Vagina (tissue), 2 donors: ENCODE measurements at regions of chr14 and their contacts with region 1.

Region 1: DNA sequence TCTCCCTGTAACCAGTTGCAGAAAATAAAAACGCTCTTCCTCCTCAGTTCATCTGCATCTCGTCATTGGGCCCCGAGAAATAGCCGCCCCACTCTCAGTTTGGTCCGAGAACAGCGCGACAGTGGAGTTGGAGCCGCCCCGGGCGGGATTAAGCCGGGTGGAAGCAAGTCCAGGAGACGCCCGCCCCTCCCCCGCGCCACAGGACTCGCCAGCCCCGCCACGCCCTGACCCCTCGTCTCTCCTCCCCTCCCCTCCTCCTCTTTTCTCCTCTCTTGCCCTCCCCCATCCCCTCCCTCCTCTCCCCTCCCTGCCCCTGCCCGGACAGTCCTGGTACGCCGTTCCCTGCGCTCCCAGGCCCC is 83.7 kb downstream of the TNFAIP2 start:
- DNase-seq: no peak
- H3K4me3 ChIP-seq: peak overlapping the region; percentile 49 to 51
- H3K27ac ChIP-seq: peak overlapping the region; percentile 90
- H3K4me1 ChIP-seq: peaks cover 31% of the 10 kb centered on the region
- H3K27me3 ChIP-seq: no peaks in the 10 kb centered on the region
- CTCF ChIP-seq: no peak
- POLR2A ChIP-seq: peak in 1 of 2 donors; percentile 27

Region 2: GRCh38 chr14:103121846-103122584 is 85.0 kb before region 1 on chr14:
- intact Hi-C with region 1: loop called (anchors 5 kb)
- DNase-seq: peak in 1 of 2 donors; percentile 97
- H3K4me3 ChIP-seq: peak overlapping the region; percentile 53 to 59
- H3K27ac ChIP-seq: peak overlapping the region; percentile 93
- H3K4me1 ChIP-seq: peaks cover 73% of the 10 kb centered on the region
- H3K27me3 ChIP-seq: no peaks in the 10 kb centered on the region
- CTCF ChIP-seq: no peak
- POLR2A ChIP-seq: no peak

Region 3: GRCh38 chr14:103847451-103848188 is 640.6 kb after region 1 on chr14 and contains the start of gene PPP1R13B:
- intact Hi-C with region 1: no loop called
- DNase-seq: no peak
- H3K4me3 ChIP-seq: peak within 1 kb of the TSS; percentile 60 to 92
- H3K27ac ChIP-seq: peak within 1 kb of the TSS; percentile 82
- H3K4me1 ChIP-seq: peaks cover 18% of the 10 kb centered on the region
- H3K27me3 ChIP-seq: no peaks in the 10 kb centered on the region
- CTCF ChIP-seq: no peak
- POLR2A ChIP-seq: no peak
- total RNA-seq, gene PPP1R13B: 34.1 TPM